ENCODE measurements at regions of chr15 and their contacts with region 1.

Region 1: GRCh38 chr15:66851226-66852071 is 149.4 kb downstream of the SMAD6 start:
- DNase-seq: peak; percentile 87 to 88
- ATAC-seq: peak; percentile 86 to 94 (median 90)
- H3K4me3 ChIP-seq: peak overlapping the region in 3 of 10 donors; percentile 10 to 23 (median 12)
- H3K27ac ChIP-seq: peak overlapping the region in 8 of 10 donors; percentile 72 to 92 (median 79)
- H3K4me1 ChIP-seq: peaks cover 15 to 38% (median 33%) of the 10 kb centered on the region in 9 donors
- H3K27me3 ChIP-seq: no peaks in the 10 kb centered on the region
- CTCF ChIP-seq: peak; percentile 94 to 99 (median 98)

Region 2: DNA sequence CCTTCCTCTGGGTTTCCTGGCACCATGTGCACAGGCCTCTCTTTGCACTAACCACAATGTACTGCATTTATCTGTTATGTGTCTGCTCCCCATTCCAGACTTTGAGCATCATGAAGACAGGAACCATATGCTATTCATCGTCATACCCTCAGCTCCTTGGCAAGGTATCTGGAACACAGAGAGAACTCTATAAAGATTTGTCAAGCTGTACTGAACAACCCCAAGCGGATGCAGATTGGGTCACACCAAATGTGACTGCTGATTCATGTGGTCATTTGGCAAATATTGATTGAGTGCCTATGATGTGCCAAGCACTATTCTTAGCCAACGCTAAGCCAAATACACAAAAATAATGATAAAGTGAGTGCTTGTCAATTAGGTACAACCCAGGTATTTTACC is 590.4 kb before region 1 on chr15:
- intact Hi-C with region 1: no loop called
- DNase-seq: no peak
- ATAC-seq: no peak
- H3K4me3 ChIP-seq: no peak overlapping the region
- H3K27ac ChIP-seq: no peak overlapping the region
- H3K4me1 ChIP-seq: no peaks in the 10 kb centered on the region
- H3K27me3 ChIP-seq: peaks cover 0 to 66% (median 44%) of the 10 kb centered on the region in 7 donors
- CTCF ChIP-seq: no peak

Region 3: DNA sequence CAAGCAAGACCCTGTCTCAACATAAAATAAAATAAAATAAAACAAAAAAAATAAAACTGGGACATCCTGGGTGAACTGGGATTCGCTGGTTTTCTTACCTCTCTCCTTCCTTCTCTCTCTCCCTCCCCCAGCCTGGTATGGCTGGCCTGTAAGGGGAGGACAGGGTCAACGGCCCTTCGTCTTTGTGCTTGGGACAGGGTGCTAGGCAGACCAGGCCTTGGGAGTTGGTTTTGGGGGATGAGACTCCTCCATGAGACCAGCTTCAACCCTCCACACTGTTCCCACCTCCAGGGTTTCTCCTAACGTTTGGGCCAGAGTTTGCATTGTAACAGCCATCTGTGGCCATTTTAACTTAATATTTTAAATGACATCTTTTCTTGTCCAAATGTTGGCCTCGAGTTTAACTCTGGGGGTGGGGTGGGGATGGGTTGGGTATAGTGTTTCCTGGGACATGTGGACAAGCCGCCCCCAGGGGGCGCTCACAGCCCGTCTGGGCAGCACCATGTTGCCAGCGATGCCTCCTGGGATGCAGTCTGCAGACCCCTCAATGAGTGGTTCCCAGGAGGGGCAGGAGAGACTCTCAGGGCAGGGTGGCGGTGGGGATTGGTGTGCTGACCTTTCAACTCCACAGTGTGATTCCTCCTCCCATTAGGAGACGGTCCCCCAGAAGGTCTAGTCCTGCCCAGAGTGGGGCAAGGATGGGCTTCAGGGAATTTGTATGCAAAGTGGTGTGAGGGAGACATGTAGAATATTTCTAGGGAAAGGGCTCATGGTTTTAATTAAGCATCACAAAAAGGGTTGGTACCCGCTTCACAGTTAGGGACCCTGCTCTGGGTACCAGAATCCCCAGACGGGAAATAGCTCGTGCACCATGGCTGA is 247.9 kb before region 1 on chr15:
- intact Hi-C with region 1: loop called in 9 of 10 experiments (anchors 1 to 5 kb)
- DNase-seq: peak; percentile 60 to 71
- ATAC-seq: peak; percentile 68 to 93 (median 84)
- H3K4me3 ChIP-seq: no peak overlapping the region
- H3K27ac ChIP-seq: no peak overlapping the region
- H3K4me1 ChIP-seq: peaks cover 0 to 6% (median 0%) of the 10 kb centered on the region in 9 donors
- H3K27me3 ChIP-seq: no peaks in the 10 kb centered on the region
- CTCF ChIP-seq: peak; percentile 77 to 88 (median 84)

Region 4: GRCh38 chr15:66707310-66708082 is 144.0 kb before region 1 on chr15:
- intact Hi-C with region 1: loop called in 5 of 10 experiments (anchors 2 to 5 kb)
- DNase-seq: peak in 1 of 2 donors; percentile 50
- ATAC-seq: peak in 7 of 8 donors; percentile 5 to 71 (median 37)
- H3K4me3 ChIP-seq: peak overlapping the region in 7 of 10 donors; percentile 62 to 85 (median 77)
- H3K27ac ChIP-seq: peak overlapping the region in 9 of 10 donors; percentile 9 to 97 (median 93)
- H3K4me1 ChIP-seq: peaks cover 7 to 78% (median 44%) of the 10 kb centered on the region in 9 donors
- H3K27me3 ChIP-seq: peaks cover 0 to 28% (median 0%) of the 10 kb centered on the region in 7 donors
- CTCF ChIP-seq: peak in 3 of 9 donors; percentile 33 to 37 (median 34)

Region 5: DNA sequence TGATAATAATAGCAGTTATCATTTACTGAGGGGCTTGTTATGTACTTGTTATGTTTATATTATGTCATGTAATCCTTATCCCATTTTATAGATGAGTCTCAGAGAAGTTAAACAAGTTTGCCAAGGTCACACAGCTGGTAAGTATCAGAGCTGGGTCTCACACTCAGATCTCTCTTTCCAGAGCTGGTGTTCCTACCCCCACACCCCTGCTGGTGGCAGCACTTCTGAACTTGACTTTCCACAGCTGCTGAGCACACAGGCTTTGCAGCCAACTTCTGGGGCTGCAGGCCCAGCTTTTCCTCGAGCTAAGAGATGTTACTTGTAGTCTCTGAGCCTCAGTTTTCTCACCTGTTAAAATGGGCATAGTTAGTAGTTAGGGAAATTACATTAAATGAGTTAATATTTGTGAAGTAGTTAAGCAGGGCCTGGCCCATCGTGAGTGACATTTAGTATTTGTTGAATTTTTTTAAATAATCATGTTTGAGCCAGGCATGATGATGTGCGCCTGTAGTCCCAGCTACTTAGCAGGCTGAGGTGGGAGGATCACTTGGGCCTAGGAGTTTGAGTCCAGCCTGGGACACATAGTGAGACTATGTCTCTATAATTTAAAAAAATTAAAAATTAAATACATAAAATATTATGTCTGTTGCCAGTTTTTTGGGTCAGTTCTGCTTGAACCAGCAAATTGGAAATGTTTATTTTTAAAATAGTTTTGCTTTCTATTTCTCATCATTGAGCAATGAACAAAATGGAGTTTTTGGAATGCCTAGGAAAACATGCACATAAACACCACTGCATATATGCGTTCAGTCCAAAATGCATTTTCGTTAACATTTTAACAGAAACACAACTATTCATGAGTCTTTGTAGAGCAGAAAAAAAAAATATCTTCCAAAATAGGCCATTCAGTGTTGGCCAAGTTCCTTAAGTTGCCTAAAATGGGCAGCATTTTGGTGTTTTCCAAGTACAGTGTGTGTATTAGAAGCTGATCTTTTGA is 62.1 kb before region 1 on chr15:
- intact Hi-C with region 1: loop called in 2 of 10 experiments (anchors 5 kb)
- DNase-seq: no peak
- ATAC-seq: peak in 5 of 8 donors; percentile 56 to 72 (median 67)
- H3K4me3 ChIP-seq: no peak overlapping the region
- H3K27ac ChIP-seq: no peak overlapping the region
- H3K4me1 ChIP-seq: peaks cover 0 to 16% (median 4%) of the 10 kb centered on the region in 9 donors
- H3K27me3 ChIP-seq: no peaks in the 10 kb centered on the region
- CTCF ChIP-seq: peak in 7 of 9 donors; percentile 40 to 59 (median 57)

Region 6: DNA sequence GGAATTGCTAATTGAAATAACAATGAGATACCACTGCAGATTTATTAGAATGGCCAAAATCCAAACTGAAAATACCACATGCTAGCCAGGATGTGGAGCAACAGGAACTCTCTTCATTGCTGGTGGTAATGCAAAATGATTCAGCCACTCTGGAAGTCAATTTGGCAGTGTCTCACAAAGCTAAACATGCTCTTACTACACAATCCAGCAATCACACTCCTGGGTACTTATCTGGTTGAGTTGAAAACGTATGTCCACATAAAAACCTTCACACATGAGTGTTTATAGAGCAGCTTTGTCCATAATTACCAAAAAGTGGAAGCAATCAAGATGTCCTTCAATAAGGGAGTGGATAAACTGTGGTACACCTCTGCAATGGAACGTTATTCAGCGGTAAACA is 36.1 kb before region 1 on chr15:
- intact Hi-C with region 1: no loop called
- DNase-seq: no peak
- ATAC-seq: no peak
- H3K4me3 ChIP-seq: no peak overlapping the region
- H3K27ac ChIP-seq: peak overlapping the region in 1 of 10 donors; percentile 32
- H3K4me1 ChIP-seq: peaks cover 0 to 12% (median 0%) of the 10 kb centered on the region in 9 donors
- H3K27me3 ChIP-seq: no peaks in the 10 kb centered on the region
- CTCF ChIP-seq: no peak

Region 7: DNA sequence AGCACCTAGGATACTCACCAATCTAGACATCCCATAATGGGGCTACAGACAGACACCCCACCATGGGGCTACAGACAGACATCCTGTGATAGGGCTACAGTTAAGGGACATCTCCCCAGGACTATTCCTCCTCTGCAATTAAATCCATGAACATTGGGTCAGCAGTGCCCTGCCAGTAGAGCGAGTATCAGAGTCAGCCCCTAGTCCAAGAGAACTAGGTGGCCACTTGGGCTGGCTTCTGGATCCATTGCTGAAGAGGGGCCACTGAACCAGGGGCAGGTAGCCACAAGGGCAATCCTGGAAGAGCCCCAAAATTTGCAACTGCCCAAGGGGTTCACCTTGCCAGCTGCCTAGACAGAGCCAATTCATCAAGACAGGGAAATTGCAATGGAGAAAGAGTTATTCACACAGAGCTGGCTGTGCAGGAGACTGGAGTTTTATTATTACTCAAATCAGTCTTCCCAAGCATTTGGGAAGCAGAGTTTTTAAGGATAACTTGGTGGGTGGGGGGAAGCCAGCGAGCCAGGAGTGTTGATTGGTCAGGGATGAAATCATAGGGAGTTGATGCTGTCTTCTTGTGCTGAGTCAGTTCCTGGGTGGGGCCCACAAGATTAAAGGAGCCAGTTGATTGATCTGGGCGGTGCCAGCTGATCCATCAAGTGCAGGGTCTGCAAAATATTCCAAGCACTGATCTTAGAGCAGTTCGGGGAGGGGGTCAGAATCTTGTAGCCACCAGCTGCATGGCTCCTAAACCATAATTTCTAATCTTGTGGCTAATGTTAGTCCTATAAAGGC is 43.7 kb after region 1 on chr15:
- intact Hi-C with region 1: no loop called
- DNase-seq: no peak
- ATAC-seq: no peak
- H3K4me3 ChIP-seq: no peak overlapping the region
- H3K27ac ChIP-seq: no peak overlapping the region
- H3K4me1 ChIP-seq: peaks cover 0 to 46% (median 10%) of the 10 kb centered on the region in 9 donors
- H3K27me3 ChIP-seq: no peaks in the 10 kb centered on the region
- CTCF ChIP-seq: no peak

Region 8: GRCh38 chr15:66940368-66940767 is 88.9 kb after region 1 on chr15:
- intact Hi-C with region 1: no loop called
- DNase-seq: no peak
- ATAC-seq: no peak
- H3K4me3 ChIP-seq: no peak overlapping the region
- H3K27ac ChIP-seq: no peak overlapping the region
- H3K4me1 ChIP-seq: peaks cover 0 to 33% (median 13%) of the 10 kb centered on the region in 9 donors
- H3K27me3 ChIP-seq: no peaks in the 10 kb centered on the region
- CTCF ChIP-seq: no peak

Measured in heart right ventricle (tissue), 16 donors.